PC-9 (cell line): ENCODE measurements at regions of chr1 and their contacts with region 1.

Region 1: GRCh38 chr1:183699616-183700160 is 46.6 kb upstream of the APOBEC4 start:
- DNase-seq: peak; percentile 52 to 99
- H3K4me3 ChIP-seq: peak overlapping the region; percentile 13; the same call in 1 of the 2 replicates
- H3K27ac ChIP-seq: peak overlapping the region; percentile 85
- H3K4me1 ChIP-seq: peaks cover 49% of the 10 kb centered on the region
- H3K27me3 ChIP-seq: no peaks in the 10 kb centered on the region
- CTCF ChIP-seq: no peak

Region 2: DNA sequence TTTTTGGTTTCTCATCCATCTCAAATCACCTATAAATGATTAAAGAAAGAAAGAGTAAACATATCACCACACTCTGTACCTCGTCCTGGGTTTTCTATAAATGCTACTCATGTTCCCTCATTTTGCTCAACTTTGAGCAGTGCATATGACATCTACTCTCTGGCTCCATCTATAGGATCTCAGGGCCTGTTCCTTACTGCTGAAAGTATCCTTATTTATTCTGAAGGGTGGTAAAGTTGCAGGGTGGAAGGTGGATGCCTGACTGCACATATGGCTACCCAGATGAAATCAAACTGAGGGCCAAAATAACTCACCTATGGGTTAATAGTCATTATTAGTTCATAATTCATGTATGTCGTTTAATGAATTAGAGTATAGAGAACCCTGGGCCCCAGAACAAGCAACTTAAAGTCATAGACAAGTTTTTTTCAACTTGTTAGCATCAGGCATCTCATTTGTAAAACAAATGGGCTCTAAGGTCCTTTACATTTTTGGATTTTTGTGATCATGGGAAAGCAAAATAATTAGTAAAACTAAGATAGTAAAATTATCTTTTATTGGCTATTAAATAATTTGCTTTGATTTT is 156.0 kb before region 1 on chr1:
- CTCF ChIA-PET with region 1: no interaction called
- POLR2A ChIA-PET with region 1: interaction called, 10 read pairs
- intact Hi-C with region 1: no loop called
- DNase-seq: peak in 1 of 2 experiments; percentile 7
- H3K4me3 ChIP-seq: no peak overlapping the region
- H3K27ac ChIP-seq: peak overlapping the region; percentile 11; the same call in 1 of the 2 replicates
- H3K4me1 ChIP-seq: no peaks in the 10 kb centered on the region
- H3K27me3 ChIP-seq: no peaks in the 10 kb centered on the region
- CTCF ChIP-seq: peak; percentile 81

Region 3: GRCh38 chr1:183635606-183636333 is 63.9 kb before region 1 on chr1 and contains the start of gene ARPC5:
- CTCF ChIA-PET with region 1: no interaction called
- POLR2A ChIA-PET with region 1: no interaction called
- intact Hi-C with region 1: loop called (anchors 5 kb)
- DNase-seq: peak; percentile 89 to 96
- H3K4me3 ChIP-seq: peak within 1 kb of the TSS; percentile 98
- H3K27ac ChIP-seq: peak within 1 kb of the TSS; percentile 69
- H3K4me1 ChIP-seq: peaks cover 36% of the 10 kb centered on the region
- H3K27me3 ChIP-seq: no peaks in the 10 kb centered on the region
- CTCF ChIP-seq: no peak
- total RNA-seq, gene ARPC5: 143 and 150 TPM in 2 replicates

Region 4: DNA sequence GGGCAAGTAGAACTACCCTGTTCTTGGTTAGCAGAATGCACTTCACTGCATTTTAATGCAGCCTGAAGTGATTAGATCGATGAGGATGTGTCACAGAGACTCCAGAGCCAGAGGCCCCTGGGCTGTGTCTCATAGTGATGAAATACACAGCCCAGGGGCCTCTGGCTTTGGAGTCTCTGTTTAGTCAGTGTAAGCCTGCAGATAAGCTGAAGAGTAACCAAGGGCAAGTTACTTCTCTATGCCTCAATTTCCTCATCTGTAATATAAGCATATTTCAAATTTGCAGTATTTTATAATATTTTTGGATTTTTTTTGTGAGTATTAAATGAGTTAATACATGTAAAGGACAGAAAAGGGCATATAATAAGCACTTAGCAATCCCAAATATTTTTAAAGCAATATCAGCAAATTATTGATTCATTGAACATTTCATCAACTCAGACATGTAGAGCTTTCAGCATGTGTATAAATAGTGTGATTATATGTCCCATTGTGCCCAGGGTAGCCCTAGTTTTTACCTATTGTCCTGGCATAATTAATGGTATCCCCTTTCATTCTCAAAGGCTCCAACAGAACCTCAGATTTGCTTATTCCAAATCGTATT is 23.0 kb before region 1 on chr1:
- CTCF ChIA-PET with region 1: no interaction called
- POLR2A ChIA-PET with region 1: no interaction called
- intact Hi-C with region 1: no loop called
- DNase-seq: peak in 1 of 2 experiments; percentile 53
- H3K4me3 ChIP-seq: no peak overlapping the region
- H3K27ac ChIP-seq: no peak overlapping the region
- H3K4me1 ChIP-seq: peaks cover 10% of the 10 kb centered on the region; the same call in 1 of the 2 replicates
- H3K27me3 ChIP-seq: no peaks in the 10 kb centered on the region
- CTCF ChIP-seq: no peak

Region 5: DNA sequence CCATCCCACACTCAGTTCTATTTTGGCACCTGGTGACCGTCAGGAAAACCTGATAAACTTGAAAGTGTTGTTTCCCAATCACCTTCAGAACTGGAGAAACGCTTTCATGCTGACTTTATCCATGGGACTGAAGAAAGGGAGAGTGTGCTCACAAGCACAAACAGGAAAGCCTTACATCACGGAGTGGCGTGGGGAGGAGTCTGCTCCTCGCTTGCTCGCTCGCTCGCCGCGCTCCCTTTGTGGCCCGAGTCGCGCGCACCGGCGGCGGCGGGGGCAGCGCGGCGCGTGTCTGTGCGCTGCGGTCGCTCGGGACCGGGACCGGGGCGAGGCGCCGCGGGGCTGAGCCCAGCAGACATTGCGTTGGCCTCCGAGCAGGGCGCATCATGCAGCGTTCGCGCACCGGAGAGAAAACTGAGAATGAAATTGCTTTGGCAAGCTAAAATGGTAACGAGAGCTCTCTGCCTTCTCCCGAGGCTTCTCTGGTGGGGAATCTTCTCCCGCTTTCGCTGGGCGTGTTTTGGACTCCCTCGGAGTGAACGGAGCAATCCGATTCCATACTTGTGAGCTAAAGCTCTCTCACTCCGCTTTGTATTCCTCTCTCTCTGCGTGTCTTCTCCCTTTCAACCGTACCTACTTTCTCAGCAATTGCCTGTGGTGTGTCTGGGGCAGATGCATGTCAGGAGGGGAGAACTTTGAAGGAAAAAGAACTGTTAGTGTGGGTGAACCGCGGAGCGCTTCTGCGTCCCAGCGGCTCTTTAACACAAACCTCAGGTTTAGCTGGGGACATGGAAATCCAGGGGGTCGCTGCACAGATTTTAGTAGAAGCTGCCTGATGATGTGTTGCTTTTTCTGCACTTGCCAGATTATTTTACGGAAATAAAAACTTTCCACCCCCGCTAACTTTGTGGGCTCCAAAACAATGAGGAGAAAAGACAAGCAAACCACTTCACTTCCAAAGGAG is 105.5 kb after region 1 on chr1 and contains the start of gene RGL1:
- CTCF ChIA-PET with region 1: no interaction called
- POLR2A ChIA-PET with region 1: no interaction called
- intact Hi-C with region 1: loop called (anchors 2 kb)
- DNase-seq: peak; percentile 68 to 91
- H3K4me3 ChIP-seq: peak within 1 kb of the TSS; percentile 77
- H3K27ac ChIP-seq: peak within 1 kb of the TSS; percentile 66
- H3K4me1 ChIP-seq: peaks cover 36% of the 10 kb centered on the region
- H3K27me3 ChIP-seq: no peaks in the 10 kb centered on the region
- CTCF ChIP-seq: no peak
- total RNA-seq, gene RGL1: 2.1 and 2.6 TPM in 2 replicates

Region 6: DNA sequence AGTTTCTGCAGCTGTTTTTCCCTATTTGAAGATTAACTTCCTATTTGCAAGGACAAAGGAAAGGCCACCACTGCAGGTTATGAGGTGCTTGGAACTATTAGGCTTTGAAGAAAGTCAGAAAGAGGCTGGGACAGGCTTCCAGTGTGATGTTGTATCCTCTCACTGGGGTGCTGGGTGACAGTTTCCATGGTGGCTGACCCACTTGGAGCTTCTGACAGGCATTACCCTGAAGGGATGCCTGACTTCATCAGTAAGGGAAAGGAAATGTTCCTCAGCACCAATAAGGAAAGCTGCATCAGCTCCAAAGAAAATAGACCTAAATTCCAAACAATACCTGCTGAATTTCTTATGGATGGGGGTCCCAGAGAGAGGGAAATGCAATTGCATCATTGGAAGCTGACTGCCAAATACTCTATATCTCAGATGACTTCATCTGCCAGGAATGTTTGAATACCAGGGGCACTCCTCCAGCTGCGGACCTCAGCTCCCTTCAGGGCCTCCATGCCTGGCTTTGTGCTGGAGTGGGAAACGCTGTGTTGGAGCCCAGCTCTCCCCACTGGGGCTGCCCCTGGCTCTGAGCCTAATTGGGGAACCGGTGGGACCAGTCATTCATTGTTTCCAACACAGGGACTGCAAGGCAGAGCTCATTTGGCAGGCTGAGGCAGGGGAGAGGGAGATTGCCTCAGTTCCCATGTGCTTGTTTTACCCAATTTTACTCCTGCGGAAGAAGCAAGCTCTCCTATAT is 181.9 kb after region 1 on chr1:
- CTCF ChIA-PET with region 1: no interaction called
- POLR2A ChIA-PET with region 1: no interaction called
- intact Hi-C with region 1: loop called (anchors 1 kb)
- DNase-seq: peak; percentile 88 to 94
- H3K4me3 ChIP-seq: peak overlapping the region; percentile 23; the same call in 1 of the 2 replicates
- H3K27ac ChIP-seq: peak overlapping the region; percentile 92
- H3K4me1 ChIP-seq: peaks cover 35% of the 10 kb centered on the region
- H3K27me3 ChIP-seq: no peaks in the 10 kb centered on the region
- CTCF ChIP-seq: no peak

Region 7: GRCh38 chr1:184051485-184052193 is 352.0 kb after region 1 on chr1 and contains the start of gene TSEN15:
- CTCF ChIA-PET with region 1: no interaction called
- POLR2A ChIA-PET with region 1: no interaction called
- intact Hi-C with region 1: no loop called
- DNase-seq: peak; percentile 78
- H3K4me3 ChIP-seq: peak within 1 kb of the TSS; percentile 81
- H3K27ac ChIP-seq: peak within 1 kb of the TSS; percentile 100
- H3K4me1 ChIP-seq: peaks cover 36% of the 10 kb centered on the region
- H3K27me3 ChIP-seq: no peaks in the 10 kb centered on the region
- CTCF ChIP-seq: no peak
- total RNA-seq, gene TSEN15: 46.0 and 52.0 TPM in 2 replicates